ENCODE measurements at regions of chr13 and their contacts with region 1.

Region 1: DNA sequence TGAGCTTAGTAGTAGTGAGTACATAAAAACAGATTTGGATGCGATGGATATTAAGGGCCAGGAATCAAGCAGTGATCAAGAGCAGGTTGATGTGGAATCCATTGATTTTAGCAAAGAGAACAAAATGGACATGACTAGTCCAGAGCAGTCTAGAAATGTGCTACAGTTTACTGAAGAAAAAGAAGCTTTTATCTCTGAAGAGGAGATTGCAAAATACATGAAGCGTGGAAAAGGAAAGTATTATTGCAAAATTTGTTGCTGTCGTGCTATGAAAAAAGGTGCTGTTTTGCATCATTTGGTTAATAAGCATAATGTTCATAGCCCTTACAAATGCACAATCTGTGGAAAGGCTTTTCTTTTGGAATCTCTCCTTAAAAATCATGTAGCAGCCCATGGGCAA is 11.4 kb downstream of the CHAMP1 start:
- DNase-seq: no peak
- H3K4me3 ChIP-seq: no peak overlapping the region
- H3K27ac ChIP-seq: no peak overlapping the region
- H3K4me1 ChIP-seq: peaks cover 0 to 6% (median 0%) of the 10 kb centered on the region in 4 experiments; a peak in 3 of 7 replicates
- H3K27me3 ChIP-seq: no peaks in the 10 kb centered on the region
- CTCF ChIP-seq: no peak
- EP300 ChIP-seq: no peak
- POLR2A ChIP-seq: no peak
- RAD21 ChIP-seq: no peak

Region 2: DNA sequence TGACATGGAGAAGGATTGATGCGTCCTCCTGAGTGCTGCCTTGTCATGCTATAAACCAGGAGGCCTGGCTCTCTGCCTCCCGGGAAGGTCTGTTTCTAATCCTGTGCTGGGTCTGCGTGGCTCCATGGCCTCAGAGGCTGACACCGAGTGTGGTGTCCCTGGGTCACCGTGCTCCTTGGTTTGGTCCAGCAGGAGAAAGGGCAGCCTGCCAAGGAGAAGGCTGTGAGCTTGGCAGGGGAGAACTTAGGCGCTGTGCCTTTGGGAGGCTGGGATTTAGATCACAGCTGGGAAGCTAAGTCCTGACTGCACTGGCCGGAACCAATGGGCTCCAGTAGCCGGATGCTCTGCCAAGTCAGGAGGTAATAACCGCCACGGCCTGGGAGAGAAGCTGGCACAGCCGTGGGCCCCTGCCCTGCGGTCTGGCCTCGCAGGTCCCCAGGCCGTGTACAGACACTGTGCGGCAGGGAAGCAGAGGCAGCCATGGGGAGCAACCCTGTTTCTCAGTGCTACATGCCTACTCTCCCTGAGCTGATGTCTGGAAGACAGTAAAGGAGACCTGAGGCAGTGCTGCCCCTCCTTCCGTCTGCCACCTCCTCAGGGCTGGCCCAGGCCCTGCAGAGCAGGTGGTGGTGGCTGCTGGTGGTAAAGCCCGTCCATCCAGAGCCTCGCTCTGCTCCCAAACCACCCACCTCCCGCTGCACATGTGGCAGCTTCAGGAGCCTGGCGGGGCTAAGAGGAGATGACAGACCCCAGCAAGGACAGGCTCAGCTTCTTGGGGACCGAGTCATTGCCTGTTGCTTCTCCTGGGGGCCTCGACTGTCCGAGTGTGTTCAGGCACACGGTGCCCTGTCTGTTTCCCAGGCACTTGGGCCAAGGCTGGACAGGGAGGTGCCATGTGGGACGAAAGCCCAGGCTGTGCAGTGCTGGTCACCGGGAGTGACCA is 396.8 kb before region 1 on chr13:
- CTCF ChIA-PET with region 1: no interaction called
- POLR2A ChIA-PET with region 1: no interaction called
- DNase-seq: no peak
- H3K4me3 ChIP-seq: no peak overlapping the region
- H3K27ac ChIP-seq: no peak overlapping the region
- H3K4me1 ChIP-seq: no peaks in the 10 kb centered on the region
- H3K27me3 ChIP-seq: no peaks in the 10 kb centered on the region
- CTCF ChIP-seq: no peak
- EP300 ChIP-seq: no peak
- POLR2A ChIP-seq: no peak
- RAD21 ChIP-seq: no peak

Region 3: GRCh38 chr13:114234645-114235421 is 90.9 kb before region 1 on chr13 and contains the start of gene CDC16:
- CTCF ChIA-PET with region 1: no interaction called
- POLR2A ChIA-PET with region 1: no interaction called
- DNase-seq: peak; percentile 80 to 89
- H3K4me3 ChIP-seq: peak within 1 kb of the TSS; percentile 76 to 88 (median 80)
- H3K27ac ChIP-seq: 0 out of 2 replicates have a peak within 1 kb of the TSS, but pooled peaks have one; percentile 11
- H3K4me1 ChIP-seq: peaks cover 8 to 14% (median 9%) of the 10 kb centered on the region in 4 experiments; a peak in 5 of 7 replicates
- H3K27me3 ChIP-seq: no peaks in the 10 kb centered on the region
- CTCF ChIP-seq: peak in 1 of 3 experiments; percentile 2; a peak in 1 of 4 replicates
- EP300 ChIP-seq: peak in 1 of 2 experiments; percentile 48; a peak in 1 of 3 replicates
- POLR2A ChIP-seq: peak; percentile 30 to 60; a peak in 1 of 3 replicates
- RAD21 ChIP-seq: no peak; a peak in 1 of 4 replicates
- total RNA-seq, gene CDC16: 78.7 and 83.4 TPM in 2 replicates

Region 4: GRCh38 chr13:114314074-114314912 is 11.4 kb before region 1 on chr13 and contains the start of gene CHAMP1:
- CTCF ChIA-PET with region 1: interaction called, 5 read pairs
- POLR2A ChIA-PET with region 1: interaction called, 51 read pairs
- DNase-seq: peak; percentile 59 to 92
- H3K4me3 ChIP-seq: peak within 1 kb of the TSS; percentile 72 to 83 (median 76)
- H3K27ac ChIP-seq: peak within 1 kb of the TSS; percentile 82
- H3K4me1 ChIP-seq: 0 out of 7 replicates have a peak, but pooled peaks cover 0 to 3% (median 0%) of the 10 kb centered on the region in 4 experiments
- H3K27me3 ChIP-seq: no peaks in the 10 kb centered on the region
- CTCF ChIP-seq: peak in 1 of 3 experiments; percentile 3; a peak in 2 of 4 replicates
- EP300 ChIP-seq: 0 out of 3 replicates have a peak, but pooled peaks of 1 of the 2 experiments have one; percentile 3
- POLR2A ChIP-seq: peak in 1 of 2 experiments; percentile 92; a peak in 2 of 3 replicates
- RAD21 ChIP-seq: no peak; a peak in 1 of 4 replicates
- total RNA-seq, gene CHAMP1: 40.6 and 41.9 TPM in 2 replicates

Measured in H1 (cell line).